HEK293 (cell line): ENCODE measurements at regions of chr12 and their contacts with region 1.

Region 1: GRCh38 chr12:103930034-103930786 is at the start of gene HSP90B1:
- H3K4me3 ChIP-seq: peak within 1 kb of the TSS; percentile 88
- H3K27ac ChIP-seq: peak within 1 kb of the TSS; percentile 80
- H3K4me1 ChIP-seq: peaks cover 10% of the 10 kb centered on the region
- CTCF ChIP-seq: no peak

Region 2: DNA sequence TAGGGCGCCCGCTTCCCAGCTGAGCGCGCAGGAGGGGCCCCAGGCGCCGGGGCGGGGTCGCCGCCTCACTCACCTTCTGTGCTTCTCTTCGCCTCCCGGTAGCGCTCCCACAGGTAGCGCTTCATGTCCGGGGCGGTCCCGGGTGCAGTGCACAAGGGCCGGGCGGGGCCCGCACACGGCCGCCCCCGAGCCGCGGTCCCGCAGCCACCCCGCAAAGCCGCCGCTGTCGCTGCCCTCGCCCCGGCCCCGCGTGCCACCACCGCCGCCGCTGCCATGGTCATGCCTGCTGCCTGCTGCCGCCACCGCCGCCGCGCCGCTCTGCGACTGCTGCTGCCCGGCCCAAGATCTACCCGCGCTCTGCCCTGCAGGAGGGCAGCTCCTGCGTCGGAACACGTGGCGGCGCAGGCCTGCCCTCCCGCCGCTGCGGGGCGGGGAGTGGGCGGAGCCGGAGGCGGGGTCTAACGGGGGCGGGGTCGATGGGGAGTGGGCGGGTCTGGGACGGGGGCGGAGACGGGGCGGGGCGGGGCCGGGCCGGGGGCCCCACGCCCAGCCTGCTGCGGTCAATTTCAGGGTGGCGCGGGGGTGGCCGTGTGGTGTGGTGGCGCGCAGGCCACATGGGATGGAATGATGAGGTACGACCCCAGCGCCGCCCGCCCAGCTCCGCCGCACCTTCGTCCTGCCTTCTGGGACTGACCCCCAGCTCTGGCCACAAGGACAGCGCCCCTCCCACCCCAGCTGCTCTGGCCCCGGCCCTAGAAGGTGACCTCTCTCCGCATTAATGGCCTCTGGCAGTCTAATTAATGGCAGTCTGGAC is 89.1 kb before region 1 on chr12 and contains the start of gene NT5DC3:
- CTCF ChIA-PET with region 1: no interaction called
- POLR2A ChIA-PET with region 1: interaction called, 15 read pairs
- H3K4me3 ChIP-seq: peak within 1 kb of the TSS; percentile 70
- H3K27ac ChIP-seq: peak within 1 kb of the TSS; percentile 61; the same call in 1 of the 2 replicates
- H3K4me1 ChIP-seq: peaks cover 3% of the 10 kb centered on the region; the same call in 1 of the 2 replicates
- CTCF ChIP-seq: no peak

Region 3: GRCh38 chr12:103915306-103915705 is 14.9 kb before region 1 on chr12:
- CTCF ChIA-PET with region 1: interaction called, 6 read pairs
- POLR2A ChIA-PET with region 1: interaction called, 16 read pairs
- H3K4me3 ChIP-seq: no peak overlapping the region
- H3K27ac ChIP-seq: no peak overlapping the region
- H3K4me1 ChIP-seq: 0 out of 2 replicates have a peak, but pooled peaks cover 2% of the 10 kb centered on the region
- CTCF ChIP-seq: no peak

Region 4: GRCh38 chr12:103948746-103949406 is 18.7 kb after region 1 on chr12:
- CTCF ChIA-PET with region 1: no interaction called
- POLR2A ChIA-PET with region 1: interaction called, 32 read pairs
- H3K4me3 ChIP-seq: no peak overlapping the region
- H3K27ac ChIP-seq: no peak overlapping the region
- H3K4me1 ChIP-seq: no peaks in the 10 kb centered on the region
- CTCF ChIP-seq: no peak

Region 5: DNA sequence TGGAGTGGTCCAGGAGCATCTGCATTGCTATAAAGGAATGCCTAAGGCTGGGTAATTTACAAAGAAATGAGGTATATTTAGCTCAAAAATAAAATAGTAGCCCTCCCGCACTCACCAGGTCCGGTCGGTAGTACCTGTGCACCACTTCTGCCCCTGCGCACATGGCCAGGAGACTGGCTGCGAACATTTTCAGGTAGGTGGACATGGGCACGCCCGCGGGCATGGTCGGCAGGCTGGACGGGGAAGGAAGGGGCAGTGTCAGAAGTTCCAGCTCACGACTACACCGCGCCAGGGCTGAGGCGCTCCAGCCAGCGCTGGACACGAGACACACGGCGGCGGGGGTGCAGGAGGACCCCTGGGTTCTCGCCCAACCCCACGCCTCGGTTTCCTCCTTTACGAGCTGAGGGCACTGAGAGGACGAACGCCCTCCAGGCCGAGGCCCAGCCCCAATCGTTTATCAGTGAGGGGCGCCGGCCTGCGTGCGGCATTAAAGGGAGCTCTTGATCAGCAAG is 26.4 kb after region 1 on chr12:
- CTCF ChIA-PET with region 1: no interaction called
- POLR2A ChIA-PET with region 1: interaction called, 26 read pairs
- H3K4me3 ChIP-seq: peak overlapping the region; percentile 79
- H3K27ac ChIP-seq: peak overlapping the region; percentile 86
- H3K4me1 ChIP-seq: 0 out of 2 replicates have a peak, but pooled peaks cover 2% of the 10 kb centered on the region
- CTCF ChIP-seq: no peak

Region 6: DNA sequence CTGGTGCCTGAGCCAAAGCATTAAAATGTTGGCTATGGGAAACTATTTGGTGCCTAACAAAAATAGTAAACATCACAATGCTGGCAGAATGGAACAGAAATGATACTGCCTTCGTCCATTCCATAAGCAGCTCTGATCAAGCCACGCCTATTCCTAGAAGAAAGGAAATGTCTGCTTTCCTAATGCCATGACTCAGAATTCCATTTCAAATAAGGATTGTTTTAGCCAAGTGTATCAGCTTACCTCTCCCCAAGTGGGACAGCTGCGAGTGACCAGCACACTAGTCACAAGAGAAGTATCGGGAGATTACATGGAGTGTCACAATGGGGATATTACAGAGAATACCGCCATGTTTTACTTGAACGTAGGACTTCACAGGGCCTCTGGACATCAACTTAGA is 81.1 kb after region 1 on chr12:
- CTCF ChIA-PET with region 1: no interaction called
- POLR2A ChIA-PET with region 1: no interaction called
- H3K4me3 ChIP-seq: no peak overlapping the region
- H3K27ac ChIP-seq: no peak overlapping the region
- H3K4me1 ChIP-seq: no peaks in the 10 kb centered on the region
- CTCF ChIP-seq: no peak

Region 7: GRCh38 chr12:104064031-104064822 is 134.0 kb after region 1 on chr12 and contains the start of gene HCFC2:
- CTCF ChIA-PET with region 1: no interaction called
- POLR2A ChIA-PET with region 1: interaction called, 11 read pairs
- H3K4me3 ChIP-seq: peak within 1 kb of the TSS; percentile 93
- H3K27ac ChIP-seq: peak within 1 kb of the TSS; percentile 82
- H3K4me1 ChIP-seq: peaks cover 3% of the 10 kb centered on the region; the same call in 1 of the 2 replicates
- CTCF ChIP-seq: peak; percentile 56; the same call in 1 of the 2 replicates

Region 8: GRCh38 chr12:104137913-104138796 is 207.9 kb after region 1 on chr12 and contains the start of gene NFYB:
- CTCF ChIA-PET with region 1: no interaction called
- POLR2A ChIA-PET with region 1: interaction called, 13 read pairs
- H3K4me3 ChIP-seq: peak within 1 kb of the TSS; percentile 88
- H3K27ac ChIP-seq: peak within 1 kb of the TSS; percentile 97
- H3K4me1 ChIP-seq: peaks cover 5% of the 10 kb centered on the region; the same call in 1 of the 2 replicates
- CTCF ChIP-seq: no peak